ENCODE measurements at regions of chr6 and their contacts with region 1.

Region 1: DNA sequence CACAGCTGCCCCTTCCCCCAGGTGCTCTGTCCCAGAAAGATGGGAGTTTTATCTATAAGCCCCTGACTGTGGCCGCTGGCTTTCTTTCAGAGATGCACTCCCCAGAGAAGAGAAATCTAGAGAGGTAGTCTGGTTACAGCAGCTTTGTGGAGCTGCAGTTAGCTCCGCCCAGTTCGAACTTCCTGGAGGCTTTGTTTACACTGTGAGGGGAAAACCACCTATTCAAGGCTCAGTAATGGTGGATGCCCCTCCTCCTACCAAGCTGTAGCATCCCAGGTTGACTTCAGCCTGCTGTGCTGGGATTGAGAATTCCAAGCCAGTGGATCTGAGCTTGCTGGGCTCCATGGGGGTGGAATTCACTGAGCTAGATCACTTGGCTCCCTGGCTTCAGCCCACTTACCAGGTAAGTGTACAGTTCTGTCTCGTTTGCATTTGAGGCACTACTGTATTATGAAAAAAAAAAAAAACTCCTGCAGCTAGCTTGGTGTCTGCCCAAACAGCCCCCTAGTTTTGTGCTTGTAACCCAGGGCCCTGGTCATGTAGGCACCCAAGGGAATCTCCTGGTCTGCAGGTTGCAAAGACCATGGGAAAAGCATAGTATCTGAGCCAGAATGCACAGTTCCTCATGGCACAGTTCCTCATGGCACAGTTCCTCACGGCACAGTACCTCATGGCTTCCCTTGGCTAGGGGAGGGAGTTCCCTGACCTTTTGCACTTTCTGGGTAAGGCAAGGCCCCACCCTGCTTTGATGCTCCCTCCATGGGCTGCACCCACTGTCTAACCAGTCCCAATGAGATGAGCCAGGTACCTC is 274.9 kb downstream of the CENPW start:
- DNase-seq: no peak
- ATAC-seq: no peak
- H3K4me3 Mint-ChIP-seq: no peak overlapping the region
- H3K27ac Mint-ChIP-seq: no peak overlapping the region
- H3K4me1 Mint-ChIP-seq: no peaks in the 10 kb centered on the region
- H3K27me3 Mint-ChIP-seq: no peaks in the 10 kb centered on the region
- CTCF ChIP-seq: no peak

Region 2: GRCh38 chr6:127554435-127555006 is 939.7 kb after region 1 on chr6:
- CTCF ChIA-PET with region 1: no interaction called
- POLR2A ChIA-PET with region 1: no interaction called
- intact Hi-C with region 1: loop called (anchors 5 kb)
- DNase-seq: no peak
- ATAC-seq: no peak
- H3K4me3 Mint-ChIP-seq: no peak overlapping the region
- H3K27ac Mint-ChIP-seq: no peak overlapping the region
- H3K4me1 Mint-ChIP-seq: no peaks in the 10 kb centered on the region
- H3K27me3 Mint-ChIP-seq: peaks cover 23% of the 10 kb centered on the region
- CTCF ChIP-seq: no peak

Measured in activated B cell treated with CpG ODN at 0.5 μM for 24 hours (primary cell).